Dorsolateral prefrontal cortex (tissue), 120 donors: ENCODE measurements at regions of chr1 and their contacts with region 1.

Region 1: DNA sequence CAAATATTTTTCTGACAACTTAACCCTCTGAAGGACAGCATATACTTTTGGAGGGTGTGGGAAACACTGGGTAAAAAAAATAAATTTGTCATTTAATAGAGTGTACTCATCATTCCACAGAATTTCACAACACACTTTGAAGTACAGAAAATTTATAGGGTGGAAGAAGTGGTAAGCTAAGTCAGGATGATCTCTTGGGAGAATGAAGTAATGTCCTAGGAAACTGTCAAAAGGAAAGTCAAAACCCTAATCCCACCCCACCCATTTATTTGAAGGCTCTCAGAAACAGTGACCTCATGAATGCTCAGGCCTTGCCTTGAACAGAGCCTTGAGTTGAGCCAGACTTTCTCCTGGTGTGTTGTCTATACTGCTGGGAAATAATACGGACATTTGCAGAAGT is 7.3 kb upstream of the UAP1 start:
- DNase-seq: no peak
- H3K4me3 ChIP-seq: no peak overlapping the region
- H3K27ac ChIP-seq: no peak overlapping the region
- H3K27me3 ChIP-seq: no peaks in the 10 kb centered on the region
- CTCF ChIP-seq: no peak

Region 2: GRCh38 chr1:162502928-162503327 is 51.3 kb before region 1 on chr1:
- intact Hi-C with region 1: loop called in 1 of 2 experiments (anchors 10 kb)
- DNase-seq: no peak
- H3K4me3 ChIP-seq: no peak overlapping the region
- H3K27ac ChIP-seq: no peak overlapping the region
- H3K27me3 ChIP-seq: no peaks in the 10 kb centered on the region
- CTCF ChIP-seq: no peak

Region 3: GRCh38 chr1:162987866-162988265 is 433.6 kb after region 1 on chr1:
- intact Hi-C with region 1: no loop called
- DNase-seq: no peak
- H3K4me3 ChIP-seq: no peak overlapping the region
- H3K27ac ChIP-seq: no peak overlapping the region
- H3K27me3 ChIP-seq: peaks cover 0 to 4% (median 0%) of the 10 kb centered on the region in 45 donors
- CTCF ChIP-seq: no peak